Thyroid gland (tissue), 4 donors: ENCODE measurements at regions of chr17 and their contacts with region 1.

Region 1: GRCh38 chr17:61389670-61390478 is 9.8 kb upstream of the TBX2 start:
- DNase-seq: peak; percentile 50 to 59
- H3K4me3 ChIP-seq: no peak overlapping the region
- H3K27ac ChIP-seq: no peak overlapping the region
- H3K4me1 ChIP-seq: peaks cover 0 to 14% of the 10 kb centered on the region in 2 donors
- H3K27me3 ChIP-seq: no peaks in the 10 kb centered on the region
- CTCF ChIP-seq: peak; percentile 71 to 93 (median 76)
- POLR2A ChIP-seq: no peak

Region 2: DNA sequence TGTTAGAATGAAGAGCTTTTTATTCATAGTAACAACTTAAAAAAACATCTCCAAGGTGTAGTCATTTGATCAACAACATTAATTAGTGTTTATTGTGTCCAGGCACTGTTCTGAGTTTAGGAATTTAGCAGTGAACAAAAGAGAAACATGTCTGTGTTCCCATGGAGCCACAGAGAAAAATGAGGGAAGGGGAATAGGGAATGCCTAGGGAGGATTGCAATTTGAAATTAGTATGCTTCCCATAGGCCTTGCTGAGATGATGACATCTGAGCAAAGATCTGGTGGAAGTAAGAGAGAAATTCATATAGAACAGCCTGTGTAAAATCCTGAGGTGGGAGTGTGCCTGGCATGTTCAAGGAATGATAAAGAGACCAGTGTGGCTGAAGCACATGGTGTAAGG is 394.2 kb before region 1 on chr17:
- intact Hi-C with region 1: loop called (anchors 5 kb)
- DNase-seq: no peak
- H3K4me3 ChIP-seq: no peak overlapping the region
- H3K27ac ChIP-seq: no peak overlapping the region
- H3K4me1 ChIP-seq: no peaks in the 10 kb centered on the region
- H3K27me3 ChIP-seq: no peaks in the 10 kb centered on the region
- CTCF ChIP-seq: no peak
- POLR2A ChIP-seq: no peak